ENCODE measurements at regions of chr19 and their contacts with region 1.

Region 1: GRCh38 chr19:6767357-6768235 is at the start of gene SH2D3A:
- DNase-seq: peak; percentile 88 to 99 (median 96)
- ATAC-seq: peak; percentile 74
- H3K4me3 ChIP-seq: peak within 1 kb of the TSS; percentile 57 to 58
- H3K4me3 Mint-ChIP-seq: peak within 1 kb of the TSS; percentile 87
- H3K27ac ChIP-seq: peak within 1 kb of the TSS; percentile 84 to 97
- H3K27ac Mint-ChIP-seq: peak within 1 kb of the TSS; percentile 97
- H3K4me1 ChIP-seq: peaks cover 43% of the 10 kb centered on the region
- H3K4me1 Mint-ChIP-seq: peaks cover 50% of the 10 kb centered on the region
- H3K27me3 ChIP-seq: no peaks in the 10 kb centered on the region
- H3K27me3 Mint-ChIP-seq: no peaks in the 10 kb centered on the region
- CTCF ChIP-seq: no peak
- total RNA-seq, gene SH2D3A: 33.5 to 38.8 TPM

Region 2: DNA sequence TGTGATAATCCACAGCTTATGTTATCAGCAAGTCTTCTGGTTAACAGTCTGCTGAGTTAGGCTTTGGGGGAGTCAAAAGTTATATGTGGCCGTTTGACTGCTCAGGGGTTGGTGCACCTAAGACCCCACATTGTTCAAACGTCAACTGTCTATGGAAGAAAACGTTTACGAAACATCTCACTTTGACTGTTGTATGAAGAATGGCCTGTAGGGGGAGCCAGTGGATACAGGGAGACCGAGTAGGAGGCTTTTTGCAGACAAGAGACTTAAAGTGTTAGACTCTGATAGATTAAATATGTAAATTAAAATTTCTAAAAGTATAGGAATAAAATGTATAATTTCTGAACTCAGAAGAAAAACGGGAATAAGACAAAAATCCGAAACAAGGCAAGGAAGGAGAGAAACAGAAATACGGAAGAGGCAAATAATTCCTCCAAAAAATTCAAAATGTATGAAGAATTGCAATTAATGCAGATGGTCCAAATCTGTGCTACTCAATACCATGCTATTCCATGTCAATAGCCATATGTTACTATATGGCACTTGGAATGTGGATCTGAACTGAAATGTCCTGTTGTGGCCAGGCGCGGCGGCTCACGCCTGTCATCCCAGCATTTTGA is 135.5 kb before region 1 on chr19:
- CTCF ChIA-PET with region 1: interaction called, 3 read pairs
- POLR2A ChIA-PET with region 1: no interaction called
- intact Hi-C with region 1: loop called in 1 of 2 experiments (anchors 2 kb)
- DNase-seq: peak; percentile 52 to 90 (median 84)
- ATAC-seq: peak; percentile 96
- H3K4me3 ChIP-seq: no peak overlapping the region
- H3K4me3 Mint-ChIP-seq: no peak overlapping the region
- H3K27ac ChIP-seq: no peak overlapping the region
- H3K27ac Mint-ChIP-seq: no peak overlapping the region
- H3K4me1 ChIP-seq: no peaks in the 10 kb centered on the region
- H3K4me1 Mint-ChIP-seq: peaks cover 12% of the 10 kb centered on the region
- H3K27me3 ChIP-seq: no peaks in the 10 kb centered on the region
- H3K27me3 Mint-ChIP-seq: peaks cover 3% of the 10 kb centered on the region
- CTCF ChIP-seq: peak; percentile 85

Region 3: DNA sequence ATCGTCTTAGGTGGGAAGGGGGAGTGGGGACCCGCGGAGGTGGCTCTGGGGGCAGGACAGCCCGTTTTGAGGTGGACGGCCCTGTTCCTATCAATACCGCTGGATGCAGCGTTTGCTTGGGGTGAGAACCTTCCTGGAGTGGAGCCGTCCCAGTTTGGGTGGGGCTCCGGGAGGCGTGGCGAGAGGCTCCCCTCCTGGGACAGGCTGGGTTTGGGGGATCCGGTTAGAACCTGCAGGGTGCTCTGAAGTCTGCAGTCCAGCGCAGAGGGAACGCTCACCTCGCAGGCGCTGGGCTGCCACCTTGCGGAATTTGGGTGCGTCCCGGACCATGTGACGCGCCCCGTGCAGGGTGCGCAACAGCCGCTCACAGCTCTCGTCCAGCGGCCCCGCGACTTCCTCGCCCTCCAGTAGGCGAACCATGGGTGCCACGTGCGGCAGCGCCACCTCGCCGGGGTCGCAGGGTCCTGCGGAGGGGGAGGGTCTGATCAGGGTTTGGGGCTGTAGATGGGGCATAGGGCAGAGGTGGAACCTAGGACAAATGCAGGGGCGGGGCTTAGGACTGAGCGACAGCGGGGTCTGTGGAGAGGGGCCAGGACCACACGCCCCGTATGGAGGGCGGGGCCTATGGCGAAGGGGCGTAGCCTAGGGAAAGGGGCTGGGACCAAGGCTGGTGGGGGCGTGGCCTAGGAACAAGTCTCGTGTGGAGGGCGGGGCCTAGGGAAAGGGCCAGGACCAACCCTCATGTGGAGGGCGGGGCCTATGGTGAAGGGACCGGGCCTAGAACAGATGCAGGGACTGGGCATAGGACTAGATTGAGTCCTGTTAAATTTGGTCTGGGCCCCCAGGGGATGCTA is 14.2 kb before region 1 on chr19:
- CTCF ChIA-PET with region 1: interaction called, 7 read pairs
- POLR2A ChIA-PET with region 1: interaction called, 3 read pairs
- intact Hi-C with region 1: loop called (anchors 1 kb)
- DNase-seq: peak; percentile 51 to 89 (median 73)
- ATAC-seq: peak; percentile 90
- H3K4me3 ChIP-seq: peak overlapping the region; percentile 42 to 59
- H3K4me3 Mint-ChIP-seq: peak overlapping the region; percentile 76
- H3K27ac ChIP-seq: peak overlapping the region; percentile 35 to 40
- H3K27ac Mint-ChIP-seq: peak overlapping the region; percentile 81
- H3K4me1 ChIP-seq: peaks cover 4% of the 10 kb centered on the region
- H3K4me1 Mint-ChIP-seq: peaks cover 12% of the 10 kb centered on the region
- H3K27me3 ChIP-seq: no peaks in the 10 kb centered on the region
- H3K27me3 Mint-ChIP-seq: no peaks in the 10 kb centered on the region
- CTCF ChIP-seq: peak; percentile 47

Region 4: DNA sequence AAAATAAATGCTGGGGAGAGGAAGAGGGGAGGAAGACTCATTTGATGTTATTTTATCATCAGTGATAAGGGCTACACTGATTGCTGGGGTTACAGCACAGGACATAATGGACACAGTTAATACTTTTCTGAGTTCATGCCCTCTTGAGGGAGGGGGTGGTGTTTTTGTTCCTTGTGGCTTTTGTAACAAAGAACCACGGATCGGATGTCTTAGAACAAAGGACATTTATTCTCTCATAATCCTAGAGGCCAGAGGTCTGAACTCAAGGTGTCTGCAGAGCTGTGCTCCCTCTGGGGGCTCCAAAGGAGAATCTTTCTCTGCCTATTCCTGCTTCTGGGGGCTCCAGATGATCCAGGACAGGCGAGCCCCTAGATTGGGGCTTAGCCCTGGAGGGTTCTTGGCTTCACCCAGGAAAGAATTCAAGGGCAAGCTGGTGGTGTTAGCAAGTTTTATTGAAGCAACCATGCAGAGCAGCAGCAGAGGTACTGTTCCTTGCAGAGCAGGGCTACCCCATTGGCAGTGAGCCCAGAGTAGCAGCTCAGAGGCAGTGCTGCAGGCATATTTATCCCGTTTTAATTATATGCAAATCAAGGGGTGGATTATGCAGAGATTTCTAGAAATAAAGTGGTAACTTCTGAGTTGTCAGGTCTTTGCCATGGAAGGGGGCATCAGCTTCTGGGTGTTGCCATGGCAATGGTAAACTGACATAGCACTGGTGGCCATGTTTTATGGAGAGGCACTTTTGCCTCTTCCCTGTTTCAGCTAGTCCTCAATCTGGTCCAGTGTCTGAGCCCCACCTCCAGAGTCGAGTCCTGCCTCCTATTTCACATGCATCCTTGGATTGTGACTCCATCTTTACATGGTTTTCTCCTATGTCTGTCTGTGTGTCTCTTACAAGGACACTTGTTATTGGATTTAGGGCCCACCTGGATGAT is 22.9 kb after region 1 on chr19:
- CTCF ChIA-PET with region 1: interaction called, 3 read pairs
- POLR2A ChIA-PET with region 1: interaction called, 3 read pairs
- intact Hi-C with region 1: loop called in 1 of 2 experiments (anchors 2 kb)
- DNase-seq: no peak
- ATAC-seq: no peak
- H3K4me3 ChIP-seq: no peak overlapping the region
- H3K4me3 Mint-ChIP-seq: peak overlapping the region; percentile 47
- H3K27ac ChIP-seq: no peak overlapping the region
- H3K27ac Mint-ChIP-seq: peak overlapping the region; percentile 85
- H3K4me1 ChIP-seq: peaks cover 45% of the 10 kb centered on the region
- H3K4me1 Mint-ChIP-seq: peaks cover 71% of the 10 kb centered on the region
- H3K27me3 ChIP-seq: no peaks in the 10 kb centered on the region
- H3K27me3 Mint-ChIP-seq: no peaks in the 10 kb centered on the region
- CTCF ChIP-seq: no peak

Region 5: GRCh38 chr19:6811906-6812305 is 44.3 kb after region 1 on chr19:
- CTCF ChIA-PET with region 1: no interaction called
- POLR2A ChIA-PET with region 1: interaction called, 11 read pairs
- intact Hi-C with region 1: no loop called
- DNase-seq: peak in 2 of 9 experiments; percentile 50 to 63
- ATAC-seq: peak; percentile 29
- H3K4me3 ChIP-seq: no peak overlapping the region
- H3K4me3 Mint-ChIP-seq: no peak overlapping the region
- H3K27ac ChIP-seq: no peak overlapping the region
- H3K27ac Mint-ChIP-seq: peak overlapping the region; percentile 72
- H3K4me1 ChIP-seq: peaks cover 46% of the 10 kb centered on the region
- H3K4me1 Mint-ChIP-seq: peaks cover 77% of the 10 kb centered on the region
- H3K27me3 ChIP-seq: no peaks in the 10 kb centered on the region
- H3K27me3 Mint-ChIP-seq: no peaks in the 10 kb centered on the region
- CTCF ChIP-seq: no peak

Measured in CD8-positive, alpha-beta T cell (primary cell).